ENCODE measurements at regions of chr15 and their contacts with region 1.

Region 1: DNA sequence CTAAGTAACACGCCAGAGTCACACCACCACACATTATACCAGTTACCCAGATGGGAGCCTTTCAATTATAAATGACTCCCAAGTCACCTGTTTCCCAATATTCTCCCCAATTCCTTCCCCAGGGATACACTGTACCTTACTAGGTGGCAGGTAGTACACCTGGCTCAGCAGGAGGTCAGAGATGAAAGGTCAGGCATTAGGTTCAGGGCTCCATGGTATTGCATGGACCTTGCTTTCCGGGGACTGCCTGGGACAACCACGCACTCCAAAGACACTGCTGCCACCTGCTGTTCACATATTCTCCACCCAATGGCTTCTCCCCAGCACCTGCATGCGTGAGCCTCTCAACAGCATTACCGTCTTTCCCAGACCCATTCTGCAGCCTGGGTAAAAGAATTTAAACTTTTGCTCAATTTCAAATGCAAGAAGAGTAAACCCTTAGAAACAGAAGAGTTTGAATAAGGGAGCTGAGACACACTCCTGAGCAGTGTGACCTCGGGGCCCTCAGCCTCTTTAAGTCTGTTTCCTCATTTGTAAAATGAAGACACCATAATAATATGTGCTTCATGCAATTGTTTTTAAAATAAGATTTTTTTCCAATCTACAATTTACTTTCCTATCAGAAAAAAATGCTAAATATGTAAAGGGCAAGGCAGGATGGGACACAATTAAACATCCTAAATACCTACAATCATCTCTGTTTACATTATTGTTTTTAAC is 28.0 kb upstream of the LACTB start:
- DNase-seq: peak; percentile 59 to 86 (median 80)
- H3K4me3 ChIP-seq: no peak overlapping the region
- H3K27ac ChIP-seq: no peak overlapping the region
- H3K27me3 ChIP-seq: no peaks in the 10 kb centered on the region
- CTCF ChIP-seq: peak; percentile 50 to 98 (median 90)

Region 2: GRCh38 chr15:62782039-62782791 is 311.4 kb before region 1 on chr15:
- intact Hi-C with region 1: loop called (anchors 2 to 5 kb)
- DNase-seq: peak in 8 of 10 donors; percentile 51 to 73 (median 60)
- H3K4me3 ChIP-seq: no peak overlapping the region
- H3K27ac ChIP-seq: peak overlapping the region in 32 of 59 donors; percentile 3 to 74 (median 34)
- H3K27me3 ChIP-seq: no peaks in the 10 kb centered on the region
- CTCF ChIP-seq: peak; percentile 45 to 85 (median 74)

Measured in dorsolateral prefrontal cortex (tissue), 120 donors.